Heart right ventricle (tissue), 16 donors: ENCODE measurements at regions of chr3 and their contacts with region 1.

Region 1: DNA sequence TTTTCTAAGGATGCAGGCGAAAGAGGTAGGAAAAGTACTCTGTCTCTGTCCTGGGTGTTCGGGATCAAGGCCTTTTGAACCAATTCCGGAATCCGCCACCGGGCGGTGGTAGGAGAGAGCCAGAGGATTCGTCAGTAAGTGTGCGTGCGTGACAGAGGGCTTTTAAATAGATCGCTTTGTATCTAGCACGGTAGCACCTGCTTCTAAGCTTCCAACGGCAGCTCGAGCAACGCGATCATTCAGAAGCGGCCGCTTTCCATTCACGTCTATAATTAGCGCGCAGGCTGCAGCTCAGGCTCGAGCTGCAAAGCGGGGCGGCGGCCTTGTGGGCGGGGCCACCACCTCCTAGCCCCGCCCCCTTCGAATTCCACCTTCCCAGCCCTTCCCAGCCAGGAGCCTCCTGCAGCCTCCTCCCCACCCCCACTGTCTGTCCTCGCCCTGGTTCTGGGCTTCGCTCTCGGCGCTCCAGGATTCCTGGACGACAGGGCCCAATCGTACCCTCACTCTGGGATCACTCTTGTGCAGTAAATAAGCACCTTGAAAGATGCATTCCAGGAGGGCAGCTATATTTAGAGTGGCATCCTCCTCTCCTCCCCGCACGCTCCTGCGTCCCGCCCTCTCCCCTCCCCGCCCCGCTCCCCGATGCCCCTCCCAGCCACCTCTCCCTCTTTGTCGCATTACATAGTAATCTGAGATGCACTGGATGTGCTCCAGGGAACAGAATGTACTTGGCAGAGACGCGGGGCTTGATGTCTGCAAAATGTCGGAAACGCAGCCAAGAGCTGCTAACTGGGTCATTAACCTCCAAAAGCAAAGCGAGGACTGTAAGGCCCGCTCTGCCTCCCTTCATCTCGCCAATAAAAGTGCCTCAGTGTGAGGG is 224.1 kb upstream of the TPRG1 start:
- DNase-seq: peak; percentile 91 to 97
- ATAC-seq: peak; percentile 88 to 95 (median 93)
- H3K4me3 ChIP-seq: peak overlapping the region in 9 of 10 donors; percentile 27 to 56 (median 52)
- H3K27ac ChIP-seq: peak overlapping the region; percentile 88 to 99 (median 97)
- H3K4me1 ChIP-seq: peaks cover 22 to 95% (median 45%) of the 10 kb centered on the region in 9 donors
- H3K27me3 ChIP-seq: no peaks in the 10 kb centered on the region
- CTCF ChIP-seq: peak in 8 of 9 donors; percentile 22 to 57 (median 36)

Region 2: GRCh38 chr3:188154014-188154808 is 793.4 kb before region 1 on chr3 and contains the start of gene LPP:
- intact Hi-C with region 1: loop called in 6 of 10 experiments (anchors 2 to 10 kb)
- DNase-seq: peak; percentile 76 to 82
- ATAC-seq: peak; percentile 72 to 93 (median 82)
- H3K4me3 ChIP-seq: peak within 1 kb of the TSS; percentile 66 to 92 (median 80)
- H3K27ac ChIP-seq: peak within 1 kb of the TSS; percentile 90 to 99 (median 96)
- H3K4me1 ChIP-seq: peaks cover 0 to 67% (median 54%) of the 10 kb centered on the region in 9 donors
- H3K27me3 ChIP-seq: no peaks in the 10 kb centered on the region
- CTCF ChIP-seq: peak in 2 of 9 donors; percentile 23 to 26
- total RNA-seq, gene LPP: 116 to 188 (median 148) TPM

Region 3: DNA sequence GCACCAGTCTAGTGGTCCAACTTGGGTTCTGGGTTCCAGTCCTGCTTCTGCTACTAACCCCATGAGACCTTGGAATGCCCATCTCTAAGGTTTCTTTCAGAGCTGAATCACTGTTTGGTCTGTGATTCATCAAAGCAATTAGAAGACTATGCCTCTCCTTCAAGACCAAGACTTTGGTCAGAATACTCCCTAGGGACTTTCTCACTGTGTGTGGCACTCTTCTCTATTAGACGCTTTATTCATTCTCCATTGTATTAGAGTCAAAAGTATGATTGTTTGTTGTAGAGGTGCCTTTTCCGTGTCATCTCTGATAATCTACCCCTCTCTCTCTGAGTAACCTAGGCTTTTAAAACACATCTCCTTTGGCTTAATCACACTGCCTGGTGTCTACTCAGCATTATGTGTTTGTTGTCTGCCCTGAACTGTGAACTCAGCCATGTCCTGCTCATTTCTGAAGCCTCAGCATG is 703.2 kb before region 1 on chr3:
- intact Hi-C with region 1: no loop called
- DNase-seq: no peak
- ATAC-seq: no peak
- H3K4me3 ChIP-seq: no peak overlapping the region
- H3K27ac ChIP-seq: peak overlapping the region in 1 of 10 donors; percentile 76
- H3K4me1 ChIP-seq: peaks cover 3 to 80% (median 35%) of the 10 kb centered on the region in 9 donors
- H3K27me3 ChIP-seq: no peaks in the 10 kb centered on the region
- CTCF ChIP-seq: no peak

Region 4: DNA sequence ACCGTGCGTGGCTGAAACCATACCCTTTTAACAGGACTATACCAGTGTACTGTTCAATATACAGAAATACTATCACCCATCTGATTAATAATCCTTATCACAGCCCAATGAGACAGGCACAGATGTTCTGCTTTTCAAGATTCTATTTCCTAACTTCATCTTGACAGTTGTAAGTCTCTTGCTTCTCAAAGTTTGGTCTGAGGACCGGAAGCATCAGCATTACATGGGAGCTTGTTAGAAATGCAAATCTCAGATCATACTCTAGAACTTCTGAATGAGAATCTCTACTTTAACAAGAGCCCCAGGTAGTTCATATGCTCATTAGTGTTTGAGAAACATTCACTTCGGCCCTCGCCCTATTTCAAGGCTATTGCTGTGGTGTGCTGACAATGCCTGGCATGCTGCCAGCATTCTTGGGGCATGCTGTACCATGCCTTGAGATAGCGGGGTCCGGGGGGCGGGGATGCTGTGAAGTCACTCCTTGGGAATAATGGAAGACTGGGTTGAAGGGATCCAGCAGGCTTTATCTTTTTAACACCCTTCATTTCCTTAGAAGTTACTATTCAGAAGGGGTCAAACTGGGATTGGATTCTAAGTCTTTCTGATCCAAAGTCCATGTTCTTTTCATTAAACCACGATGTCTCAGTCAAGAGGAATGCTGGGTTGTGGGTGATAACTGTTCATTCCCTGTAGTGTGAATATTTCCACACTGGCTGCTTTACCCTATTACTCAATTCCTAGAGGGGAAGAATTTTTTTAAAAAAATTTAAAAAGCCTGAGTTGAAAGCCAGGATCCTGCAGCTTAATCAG is 599.0 kb before region 1 on chr3:
- intact Hi-C with region 1: loop called in 5 of 10 experiments (anchors 2 to 10 kb)
- DNase-seq: peak; percentile 69 to 74
- ATAC-seq: peak; percentile 71 to 83 (median 76)
- H3K4me3 ChIP-seq: no peak overlapping the region
- H3K27ac ChIP-seq: peak overlapping the region; percentile 23 to 81 (median 63)
- H3K4me1 ChIP-seq: peaks cover 8 to 70% (median 45%) of the 10 kb centered on the region in 9 donors
- H3K27me3 ChIP-seq: no peaks in the 10 kb centered on the region
- CTCF ChIP-seq: no peak

Region 5: GRCh38 chr3:188631291-188632010 is 316.2 kb before region 1 on chr3:
- intact Hi-C with region 1: loop called in 1 of 10 experiments (anchors 10 kb)
- DNase-seq: no peak
- ATAC-seq: no peak
- H3K4me3 ChIP-seq: no peak overlapping the region
- H3K27ac ChIP-seq: no peak overlapping the region
- H3K4me1 ChIP-seq: peaks cover 0 to 34% (median 8%) of the 10 kb centered on the region in 9 donors
- H3K27me3 ChIP-seq: no peaks in the 10 kb centered on the region
- CTCF ChIP-seq: no peak

Region 6: DNA sequence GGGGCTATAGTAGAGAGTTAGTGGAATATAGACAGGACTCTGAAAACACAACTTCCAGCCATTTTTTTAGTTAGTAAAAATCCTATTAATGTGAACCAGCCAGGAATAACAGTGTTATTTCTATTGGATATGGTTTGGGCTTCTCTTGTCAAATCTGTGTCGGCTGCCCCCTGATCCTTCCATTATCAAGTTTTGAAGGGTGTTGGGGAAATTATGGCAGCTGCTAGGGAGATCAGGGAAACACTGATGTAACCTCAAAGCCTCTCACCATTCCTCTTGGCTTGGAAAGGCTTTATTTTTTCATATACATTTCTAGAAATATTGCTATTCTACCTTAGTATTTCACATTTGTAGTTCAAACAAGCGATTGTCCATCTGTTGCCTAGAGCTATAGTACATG is 69.6 kb before region 1 on chr3:
- intact Hi-C with region 1: no loop called
- DNase-seq: no peak
- ATAC-seq: no peak
- H3K4me3 ChIP-seq: no peak overlapping the region
- H3K27ac ChIP-seq: no peak overlapping the region
- H3K4me1 ChIP-seq: peaks cover 0 to 15% (median 0%) of the 10 kb centered on the region in 9 donors
- H3K27me3 ChIP-seq: no peaks in the 10 kb centered on the region
- CTCF ChIP-seq: no peak

Region 7: GRCh38 chr3:188889054-188889491 is 58.6 kb before region 1 on chr3:
- intact Hi-C with region 1: loop called in 2 of 10 experiments (anchors 5 kb)
- DNase-seq: peak in 1 of 2 donors; percentile 12
- ATAC-seq: peak; percentile 70 to 92 (median 86)
- H3K4me3 ChIP-seq: no peak overlapping the region
- H3K27ac ChIP-seq: peak overlapping the region in 8 of 10 donors; percentile 3 to 70 (median 55)
- H3K4me1 ChIP-seq: peaks cover 0 to 34% (median 27%) of the 10 kb centered on the region in 9 donors
- H3K27me3 ChIP-seq: no peaks in the 10 kb centered on the region
- CTCF ChIP-seq: no peak

Region 8: GRCh38 chr3:189394599-189395121 is 447.0 kb after region 1 on chr3:
- intact Hi-C with region 1: no loop called
- DNase-seq: no peak
- ATAC-seq: no peak
- H3K4me3 ChIP-seq: no peak overlapping the region
- H3K27ac ChIP-seq: no peak overlapping the region
- H3K4me1 ChIP-seq: peaks cover 0 to 11% (median 0%) of the 10 kb centered on the region in 9 donors
- H3K27me3 ChIP-seq: no peaks in the 10 kb centered on the region
- CTCF ChIP-seq: no peak